MCF 10A (cell line): ENCODE measurements at regions of chr1 and their contacts with region 1.

Region 1: GRCh38 chr1:204162231-204163074 is 3.7 kb downstream of the REN start:
- DNase-seq: peak; percentile 95
- H3K4me3 Mint-ChIP-seq: no peak overlapping the region
- H3K27ac Mint-ChIP-seq: no peak overlapping the region
- H3K4me1 Mint-ChIP-seq: peaks cover 6% of the 10 kb centered on the region
- H3K27me3 Mint-ChIP-seq: no peaks in the 10 kb centered on the region
- CTCF ChIP-seq: peak; percentile 100

Region 2: DNA sequence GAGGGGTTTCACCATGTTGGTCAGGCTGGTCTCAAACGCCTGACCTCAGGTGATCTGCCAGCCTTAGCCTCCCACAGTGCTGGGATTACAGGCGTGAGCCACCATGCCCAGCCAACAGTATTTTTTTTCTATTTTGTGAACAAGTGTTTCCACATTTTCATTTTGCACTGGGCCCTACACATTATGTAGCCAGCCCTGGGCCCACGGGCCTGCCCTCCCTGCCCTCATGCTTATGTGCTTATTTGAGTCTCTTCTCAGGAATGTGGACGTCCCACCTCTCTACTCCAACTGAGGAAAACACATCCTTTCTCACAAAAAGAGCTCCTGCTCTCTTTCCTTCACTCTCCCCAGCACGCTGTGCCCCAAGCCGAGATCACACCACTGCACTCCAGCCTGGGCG is 380.5 kb before region 1 on chr1:
- CTCF ChIA-PET with region 1: no interaction called
- POLR2A ChIA-PET with region 1: no interaction called
- intact Hi-C with region 1: no loop called
- DNase-seq: no peak
- H3K4me3 Mint-ChIP-seq: no peak overlapping the region
- H3K27ac Mint-ChIP-seq: no peak overlapping the region
- H3K4me1 Mint-ChIP-seq: no peaks in the 10 kb centered on the region
- H3K27me3 Mint-ChIP-seq: no peaks in the 10 kb centered on the region
- CTCF ChIP-seq: no peak

Region 3: GRCh38 chr1:204128964-204129896 is 33.2 kb before region 1 on chr1:
- CTCF ChIA-PET with region 1: interaction called, 17 read pairs
- POLR2A ChIA-PET with region 1: interaction called, 3 read pairs
- intact Hi-C with region 1: loop called (anchors 1 kb)
- DNase-seq: peak; percentile 86
- H3K4me3 Mint-ChIP-seq: peak overlapping the region; percentile 68
- H3K27ac Mint-ChIP-seq: peak overlapping the region; percentile 63
- H3K4me1 Mint-ChIP-seq: peaks cover 58% of the 10 kb centered on the region
- H3K27me3 Mint-ChIP-seq: no peaks in the 10 kb centered on the region
- CTCF ChIP-seq: peak; percentile 100

Region 4: GRCh38 chr1:204190212-204191211 is 28.1 kb after region 1 on chr1:
- CTCF ChIA-PET with region 1: interaction called, 68 read pairs
- POLR2A ChIA-PET with region 1: interaction called, 3 read pairs
- intact Hi-C with region 1: no loop called
- DNase-seq: no peak
- H3K4me3 Mint-ChIP-seq: no peak overlapping the region
- H3K27ac Mint-ChIP-seq: no peak overlapping the region
- H3K4me1 Mint-ChIP-seq: no peaks in the 10 kb centered on the region
- H3K27me3 Mint-ChIP-seq: peaks cover 66% of the 10 kb centered on the region
- CTCF ChIP-seq: no peak

Region 5: GRCh38 chr1:204213668-204214662 is 51.5 kb after region 1 on chr1 and contains the start of gene GOLT1A:
- CTCF ChIA-PET with region 1: interaction called, 45 read pairs
- POLR2A ChIA-PET with region 1: no interaction called
- intact Hi-C with region 1: no loop called
- DNase-seq: peak; percentile 93
- H3K4me3 Mint-ChIP-seq: peak within 1 kb of the TSS; percentile 68
- H3K27ac Mint-ChIP-seq: peak within 1 kb of the TSS; percentile 8
- H3K4me1 Mint-ChIP-seq: peaks cover 6% of the 10 kb centered on the region
- H3K27me3 Mint-ChIP-seq: no peaks in the 10 kb centered on the region
- CTCF ChIP-seq: peak; percentile 93
- total RNA-seq, gene GOLT1A: 11.5 and 12.7 TPM in 2 replicates

Region 6: DNA sequence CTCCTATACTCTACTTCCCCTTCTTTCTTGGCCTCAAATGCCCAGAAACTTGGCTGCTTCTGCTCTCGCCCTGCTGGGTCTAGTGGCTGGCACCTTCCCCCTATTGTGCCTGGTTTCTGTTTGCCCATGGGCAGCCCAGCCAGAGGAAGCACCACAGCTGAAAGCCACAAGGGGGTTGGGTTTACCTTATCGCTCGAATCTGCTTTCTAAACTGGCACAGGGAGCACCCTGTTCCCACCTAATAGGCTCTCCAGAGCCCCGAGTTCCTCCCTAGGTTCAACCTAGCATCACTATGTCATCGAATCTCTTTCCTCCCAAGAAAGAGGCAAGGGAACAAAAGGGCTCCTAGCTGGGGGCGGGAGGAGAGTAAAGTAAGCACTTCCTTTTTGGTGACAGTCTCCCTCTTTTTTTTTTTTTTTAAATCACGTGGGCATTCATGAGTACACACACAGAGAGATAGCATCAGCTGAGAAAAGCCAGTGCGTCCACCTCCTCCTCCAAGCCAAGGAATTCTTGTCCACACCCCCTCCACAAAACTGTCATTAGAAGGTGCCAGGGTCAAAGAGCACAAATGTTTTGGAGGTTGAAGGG is 124.5 kb after region 1 on chr1:
- CTCF ChIA-PET with region 1: interaction called, 13 read pairs
- POLR2A ChIA-PET with region 1: no interaction called
- intact Hi-C with region 1: no loop called
- DNase-seq: peak; percentile 67
- H3K4me3 Mint-ChIP-seq: peak overlapping the region; percentile 89
- H3K27ac Mint-ChIP-seq: peak overlapping the region; percentile 88
- H3K4me1 Mint-ChIP-seq: peaks cover 74% of the 10 kb centered on the region
- H3K27me3 Mint-ChIP-seq: no peaks in the 10 kb centered on the region
- CTCF ChIP-seq: peak; percentile 14

Region 7: GRCh38 chr1:204404629-204405028 is 242.2 kb after region 1 on chr1:
- CTCF ChIA-PET with region 1: interaction called, 123 read pairs
- POLR2A ChIA-PET with region 1: interaction called, 3 read pairs
- intact Hi-C with region 1: no loop called
- DNase-seq: no peak
- H3K4me3 Mint-ChIP-seq: no peak overlapping the region
- H3K27ac Mint-ChIP-seq: no peak overlapping the region
- H3K4me1 Mint-ChIP-seq: peaks cover 25% of the 10 kb centered on the region
- H3K27me3 Mint-ChIP-seq: no peaks in the 10 kb centered on the region
- CTCF ChIP-seq: no peak

Region 8: DNA sequence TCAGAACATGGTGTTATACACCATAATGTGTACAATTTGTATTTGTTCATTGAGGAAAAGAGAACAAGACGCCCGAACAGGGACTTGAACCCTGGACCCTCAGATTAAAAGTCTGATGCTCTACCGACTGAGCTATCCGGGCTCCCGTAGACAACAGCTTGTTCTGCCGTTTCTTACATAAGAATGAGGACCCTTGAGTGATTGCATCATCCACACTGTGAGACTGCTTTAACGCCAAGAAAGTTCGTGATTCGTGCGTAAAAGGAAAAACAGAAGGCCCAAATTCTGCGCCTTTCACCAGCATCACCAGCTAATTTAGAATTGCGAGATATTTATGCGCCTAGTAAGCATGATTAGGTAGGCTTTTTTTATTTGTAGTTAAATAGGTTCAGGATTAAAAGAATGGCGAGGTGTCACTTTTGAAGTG is 344.5 kb after region 1 on chr1:
- CTCF ChIA-PET with region 1: interaction called, 7 read pairs
- POLR2A ChIA-PET with region 1: interaction called, 3 read pairs
- intact Hi-C with region 1: loop called (anchors 2 kb)
- DNase-seq: peak; percentile 98
- H3K4me3 Mint-ChIP-seq: peak overlapping the region; percentile 77
- H3K27ac Mint-ChIP-seq: peak overlapping the region; percentile 90
- H3K4me1 Mint-ChIP-seq: peaks cover 29% of the 10 kb centered on the region
- H3K27me3 Mint-ChIP-seq: no peaks in the 10 kb centered on the region
- CTCF ChIP-seq: no peak

Region 9: DNA sequence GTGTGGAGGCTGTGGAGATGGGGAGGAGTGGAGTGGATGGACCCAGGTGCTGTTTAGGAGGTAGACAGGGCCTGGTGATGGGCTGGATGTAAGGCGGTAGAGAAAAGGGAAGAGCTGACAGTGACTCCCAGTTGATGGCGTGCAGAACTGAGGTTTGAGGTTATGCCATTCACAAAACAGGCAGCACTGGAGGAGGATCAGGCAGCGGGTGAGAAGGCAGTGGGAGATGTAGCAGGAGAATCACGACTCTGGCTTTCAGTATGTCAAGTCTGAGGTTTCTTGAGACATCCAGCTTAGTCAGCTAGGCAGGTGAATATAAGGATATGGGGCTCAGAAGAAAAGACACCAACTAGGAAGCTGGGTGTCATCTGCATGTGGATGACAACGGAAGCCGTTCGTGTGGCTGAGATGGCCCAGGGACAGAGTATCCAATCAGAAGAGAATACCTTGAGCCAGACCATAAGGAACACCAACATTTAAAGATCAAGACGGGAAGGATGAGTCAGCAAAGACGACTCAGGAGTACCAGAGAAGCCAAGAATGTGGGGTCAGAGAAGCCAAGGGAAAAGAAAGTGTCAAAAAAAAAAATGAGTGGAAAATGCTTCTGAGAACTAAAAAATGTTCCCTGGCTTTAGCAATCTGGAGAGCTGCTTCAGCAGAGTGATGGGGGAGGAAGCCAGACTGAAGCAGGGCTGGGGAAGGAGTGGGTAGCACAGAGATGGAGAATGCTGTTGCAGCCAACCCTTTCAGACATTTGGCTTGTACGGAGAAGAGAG is 507.9 kb after region 1 on chr1:
- CTCF ChIA-PET with region 1: no interaction called
- POLR2A ChIA-PET with region 1: no interaction called
- intact Hi-C with region 1: no loop called
- DNase-seq: peak; percentile 60
- H3K4me3 Mint-ChIP-seq: no peak overlapping the region
- H3K27ac Mint-ChIP-seq: no peak overlapping the region
- H3K4me1 Mint-ChIP-seq: no peaks in the 10 kb centered on the region
- H3K27me3 Mint-ChIP-seq: peaks cover 1% of the 10 kb centered on the region
- CTCF ChIP-seq: no peak